ENCODE measurements at regions of chr1 and their contacts with region 1.

Region 1: DNA sequence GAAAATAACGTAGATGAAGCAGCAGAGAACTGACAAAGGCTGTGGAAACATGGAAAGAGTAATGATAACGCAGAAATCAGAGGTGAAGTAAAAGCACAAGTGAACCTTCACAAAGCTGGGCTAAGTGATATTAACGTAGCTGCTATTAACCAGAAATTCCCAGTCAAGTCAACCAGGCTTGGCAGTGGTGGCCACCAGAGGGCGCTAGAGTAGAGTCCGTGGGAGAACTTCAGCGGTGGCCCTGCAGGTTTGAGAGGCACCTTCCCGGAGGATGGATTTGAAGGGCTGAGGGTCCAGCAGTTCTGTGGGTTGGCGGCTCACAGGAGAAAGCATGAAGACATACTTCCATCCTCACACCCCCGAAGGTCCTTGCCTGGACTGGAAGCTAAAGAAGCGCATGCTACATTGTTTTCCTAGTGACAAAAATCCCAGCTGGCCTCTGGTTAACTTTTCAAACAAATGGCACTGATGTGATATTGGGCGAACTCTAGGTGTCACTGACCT is 81.7 kb upstream of the ZNF648 start:
- DNase-seq: peak; percentile 75
- H3K4me3 ChIP-seq: peak overlapping the region in 1 of 2 experiments; percentile 54; a peak in 1 of 4 replicates
- H3K27ac ChIP-seq: no peak overlapping the region; a peak in 1 of 4 replicates
- H3K4me1 ChIP-seq: peaks cover 0 to 14% of the 10 kb centered on the region in 2 experiments; a peak in 1 of 4 replicates
- H3K27me3 ChIP-seq: no peaks in the 10 kb centered on the region
- CTCF ChIP-seq: peak; percentile 73
- EP300 ChIP-seq: no peak
- RAD21 ChIP-seq: peak; percentile 86

Region 2: GRCh38 chr1:181676269-181676668 is 466.9 kb before region 1 on chr1:
- CTCF ChIA-PET with region 1: no interaction called
- POLR2A ChIA-PET with region 1: no interaction called
- DNase-seq: peak; percentile 64
- H3K4me3 ChIP-seq: no peak overlapping the region
- H3K27ac ChIP-seq: no peak overlapping the region
- H3K4me1 ChIP-seq: no peaks in the 10 kb centered on the region
- H3K27me3 ChIP-seq: no peaks in the 10 kb centered on the region
- CTCF ChIP-seq: no peak
- EP300 ChIP-seq: no peak
- RAD21 ChIP-seq: peak; percentile 50

Region 3: DNA sequence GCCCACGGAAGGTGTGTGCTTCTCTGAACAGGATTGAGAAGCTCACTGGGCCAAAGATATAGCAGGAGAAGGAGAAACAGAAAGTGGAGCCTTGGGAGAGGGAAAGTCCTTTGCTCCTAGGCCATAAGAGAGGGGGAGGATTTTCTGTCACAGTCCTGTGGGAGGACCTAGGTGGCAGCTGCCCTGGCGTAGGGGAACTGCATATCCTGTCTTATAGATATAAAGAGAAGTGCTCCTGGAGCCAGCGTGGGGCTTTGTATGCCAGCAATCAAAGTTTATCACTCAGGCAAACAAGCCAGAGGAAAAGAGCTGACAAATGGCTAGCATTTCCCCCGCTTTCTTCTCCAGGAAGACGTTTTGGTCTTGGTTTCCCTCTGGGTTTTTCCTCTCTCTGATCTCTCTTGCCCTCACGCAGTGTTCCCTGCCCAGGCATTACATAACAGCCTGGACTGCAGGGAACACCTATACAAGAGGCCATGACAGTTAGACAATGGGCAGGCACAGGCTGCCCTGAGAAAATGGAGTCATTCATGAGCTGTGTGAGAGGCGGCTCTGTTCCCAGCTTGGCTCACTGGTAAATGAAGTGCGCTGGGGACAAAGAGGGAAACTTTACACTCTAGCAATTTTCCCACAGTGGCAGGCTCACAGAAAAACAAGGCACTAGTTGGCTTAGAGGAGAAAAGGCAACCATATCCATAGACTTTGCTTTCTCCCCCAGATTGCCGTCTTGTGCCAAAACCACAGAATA is 29.2 kb before region 1 on chr1:
- CTCF ChIA-PET with region 1: interaction called, 17 read pairs
- POLR2A ChIA-PET with region 1: no interaction called
- DNase-seq: no peak
- H3K4me3 ChIP-seq: no peak overlapping the region
- H3K27ac ChIP-seq: no peak overlapping the region
- H3K4me1 ChIP-seq: no peaks in the 10 kb centered on the region
- H3K27me3 ChIP-seq: no peaks in the 10 kb centered on the region
- CTCF ChIP-seq: no peak
- EP300 ChIP-seq: no peak
- RAD21 ChIP-seq: no peak

Region 4: GRCh38 chr1:182157187-182157586 is 14.0 kb after region 1 on chr1:
- CTCF ChIA-PET with region 1: interaction called, 25 read pairs
- POLR2A ChIA-PET with region 1: no interaction called
- DNase-seq: no peak
- H3K4me3 ChIP-seq: no peak overlapping the region
- H3K27ac ChIP-seq: no peak overlapping the region
- H3K4me1 ChIP-seq: no peaks in the 10 kb centered on the region
- H3K27me3 ChIP-seq: no peaks in the 10 kb centered on the region
- CTCF ChIP-seq: no peak
- EP300 ChIP-seq: no peak
- RAD21 ChIP-seq: no peak

Region 5: DNA sequence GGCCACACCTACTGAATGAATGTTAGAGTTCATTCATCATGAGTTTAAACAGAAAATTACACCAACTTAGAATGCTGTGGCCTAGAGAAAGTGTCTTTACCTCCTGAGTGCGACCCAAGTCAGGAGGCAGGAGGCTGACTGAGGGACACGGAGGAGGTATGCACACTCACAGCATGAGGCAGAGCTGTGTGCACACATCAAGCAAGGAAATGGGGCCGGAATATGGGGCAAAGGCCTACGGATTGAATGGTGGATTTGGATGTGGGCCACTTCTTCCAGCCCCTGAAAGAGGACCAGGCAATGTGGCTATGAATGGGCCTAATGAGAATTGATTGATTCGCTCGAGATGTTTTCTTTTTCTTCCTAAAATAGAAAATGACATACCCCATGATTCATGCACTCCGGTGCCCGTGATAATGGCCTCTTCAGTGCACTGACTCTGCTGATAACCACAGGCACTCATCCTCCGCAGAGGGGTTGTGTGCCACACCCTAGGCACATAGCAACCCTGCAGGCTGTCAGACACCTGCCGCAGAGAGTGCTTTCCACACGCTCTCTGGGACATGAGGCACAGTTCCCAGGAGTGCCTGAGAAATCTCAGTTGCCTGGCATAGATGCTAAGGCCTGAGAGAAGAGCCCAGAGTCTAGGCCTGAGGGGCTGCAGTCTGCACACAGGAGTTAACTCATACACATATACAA is 92.9 kb after region 1 on chr1:
- CTCF ChIA-PET with region 1: interaction called, 10 read pairs
- POLR2A ChIA-PET with region 1: no interaction called
- DNase-seq: no peak
- H3K4me3 ChIP-seq: no peak overlapping the region
- H3K27ac ChIP-seq: no peak overlapping the region
- H3K4me1 ChIP-seq: peaks cover 0 to 7% of the 10 kb centered on the region in 2 experiments; a peak in 1 of 4 replicates
- H3K27me3 ChIP-seq: no peaks in the 10 kb centered on the region
- CTCF ChIP-seq: no peak
- EP300 ChIP-seq: no peak
- RAD21 ChIP-seq: no peak

Region 6: DNA sequence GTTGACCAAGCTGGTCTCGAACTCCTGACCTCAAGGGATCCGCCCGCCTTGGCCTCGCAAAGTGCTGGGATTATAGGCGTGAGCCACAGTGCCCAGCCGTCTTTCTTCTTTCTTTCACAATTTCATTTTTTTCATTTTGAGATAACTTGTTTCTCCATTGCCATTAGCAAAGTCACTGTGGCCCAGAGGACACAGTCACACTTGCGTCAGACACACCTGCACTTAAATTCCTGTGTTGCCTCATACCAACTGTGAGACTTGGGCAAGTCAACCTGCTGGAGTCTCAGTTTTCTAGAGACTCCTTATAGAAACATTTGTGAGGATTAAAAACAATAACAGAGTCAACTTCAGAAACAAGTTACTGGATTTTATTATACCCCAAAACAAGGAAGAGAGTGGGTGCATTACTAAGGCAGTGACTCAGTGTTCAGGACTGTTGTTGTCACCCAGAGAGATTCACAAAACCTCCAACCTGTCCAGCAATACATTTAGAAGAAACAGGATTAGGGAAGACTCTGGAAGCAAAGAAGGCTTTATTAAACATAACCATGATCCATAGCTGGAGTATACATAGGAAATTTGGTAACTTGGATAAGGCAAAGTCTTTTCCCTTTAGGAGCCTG is 254.7 kb after region 1 on chr1:
- CTCF ChIA-PET with region 1: interaction called, 350 read pairs
- POLR2A ChIA-PET with region 1: interaction called, 31 read pairs
- DNase-seq: no peak
- H3K4me3 ChIP-seq: no peak overlapping the region
- H3K27ac ChIP-seq: no peak overlapping the region
- H3K4me1 ChIP-seq: peaks cover 0 to 3% of the 10 kb centered on the region in 2 experiments; a peak in 2 of 4 replicates
- H3K27me3 ChIP-seq: no peaks in the 10 kb centered on the region
- CTCF ChIP-seq: no peak
- EP300 ChIP-seq: no peak
- RAD21 ChIP-seq: no peak

Measured in SK-N-SH (cell line).